GM10248 (cell line): ENCODE measurements at regions of chr3 and their contacts with region 1.

Region 1: GRCh38 chr3:31079691-31080090 is 185.2 kb upstream of the GADL1 start:
- DNase-seq: no peak
- CTCF ChIP-seq: no peak

Region 2: DNA sequence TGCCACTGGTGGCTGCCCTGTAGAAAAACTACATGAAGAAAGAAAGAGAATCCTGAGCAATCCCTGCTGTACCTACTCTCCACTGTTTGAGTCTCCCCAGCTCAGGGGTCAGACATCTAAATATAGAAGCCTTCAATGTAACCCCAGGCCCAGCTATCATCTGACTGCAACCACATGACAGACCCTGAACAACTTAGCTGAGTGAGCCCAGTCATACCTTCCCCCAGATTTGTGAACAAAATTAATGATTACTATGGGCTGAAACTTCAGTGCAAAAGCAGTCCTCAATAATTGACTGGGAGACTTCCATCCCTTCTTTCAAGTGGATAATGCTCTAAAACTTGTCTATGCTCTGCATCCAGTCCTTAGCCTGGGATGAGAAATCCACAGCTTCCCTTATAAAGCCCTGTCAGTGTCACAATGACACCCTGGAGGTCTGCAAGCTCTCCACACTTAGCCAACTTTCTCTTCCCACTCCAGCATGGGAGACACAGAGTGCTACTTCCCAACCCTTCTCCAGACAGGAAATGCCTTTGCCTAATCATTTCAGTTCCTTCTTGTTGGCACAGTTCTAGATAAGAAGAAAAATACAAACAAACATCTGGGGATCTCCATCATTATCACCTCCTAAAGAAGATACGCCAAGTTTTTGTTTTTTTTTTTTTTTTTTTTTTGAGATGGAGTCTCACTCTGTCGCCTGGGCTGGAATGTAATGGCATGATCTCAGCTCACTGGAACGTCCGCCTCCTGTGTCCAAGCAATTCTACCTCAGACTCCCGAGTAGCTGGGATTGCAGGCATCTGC is 13.3 kb after region 1 on chr3:
- CTCF ChIA-PET with region 1: interaction called, 13 read pairs
- POLR2A ChIA-PET with region 1: interaction called, 3 read pairs
- DNase-seq: no peak
- CTCF ChIP-seq: no peak